Transverse colon (tissue), 4 donors: ENCODE measurements at regions of chr1 and their contacts with region 1.

Region 1: GRCh38 chr1:236836157-236836556 is 41.1 kb downstream of the MTR start:
- DNase-seq: no peak
- H3K4me3 ChIP-seq: no peak overlapping the region
- H3K27ac ChIP-seq: no peak overlapping the region
- H3K4me1 ChIP-seq: no peaks in the 10 kb centered on the region
- H3K27me3 ChIP-seq: no peaks in the 10 kb centered on the region
- CTCF ChIP-seq: no peak
- EP300 ChIP-seq: no peak
- POLR2A ChIP-seq: no peak

Region 2: DNA sequence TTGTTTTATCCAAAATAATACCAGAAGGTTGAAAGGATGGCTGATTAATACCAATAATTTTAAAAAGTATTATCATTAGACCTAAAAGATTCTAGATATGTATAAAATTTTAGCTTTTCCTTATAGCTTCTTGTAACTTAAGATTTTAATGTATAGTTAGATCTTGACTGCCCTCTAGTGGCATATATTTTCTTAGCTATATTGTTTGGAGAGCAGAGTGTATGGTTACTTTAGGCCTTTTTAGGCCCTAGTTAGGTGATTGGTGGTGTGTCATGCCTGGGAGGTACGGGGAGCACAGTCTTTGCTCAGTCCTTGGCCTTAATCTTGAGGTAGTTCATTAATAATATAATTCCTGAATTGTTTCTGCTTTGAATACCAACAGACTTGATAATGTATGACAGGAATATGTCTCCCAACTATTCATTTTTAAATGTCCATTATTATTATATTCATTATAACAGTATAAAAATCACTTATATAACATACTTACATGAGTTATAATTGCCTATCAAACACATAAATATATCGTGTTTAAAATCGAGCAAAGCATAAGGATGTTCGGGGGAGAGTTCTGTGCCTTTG is 726.2 kb after region 1 on chr1:
- in situ Hi-C with region 1: no loop called
- intact Hi-C with region 1: loop called (anchors 5 kb)
- DNase-seq: no peak
- H3K4me3 ChIP-seq: no peak overlapping the region
- H3K27ac ChIP-seq: no peak overlapping the region
- H3K4me1 ChIP-seq: no peaks in the 10 kb centered on the region
- H3K27me3 ChIP-seq: no peaks in the 10 kb centered on the region
- CTCF ChIP-seq: peak; percentile 46 to 66 (median 51)
- EP300 ChIP-seq: no peak
- POLR2A ChIP-seq: no peak